B cell (primary cell): ENCODE measurements at regions of chr16 and their contacts with region 1.

Region 1: DNA sequence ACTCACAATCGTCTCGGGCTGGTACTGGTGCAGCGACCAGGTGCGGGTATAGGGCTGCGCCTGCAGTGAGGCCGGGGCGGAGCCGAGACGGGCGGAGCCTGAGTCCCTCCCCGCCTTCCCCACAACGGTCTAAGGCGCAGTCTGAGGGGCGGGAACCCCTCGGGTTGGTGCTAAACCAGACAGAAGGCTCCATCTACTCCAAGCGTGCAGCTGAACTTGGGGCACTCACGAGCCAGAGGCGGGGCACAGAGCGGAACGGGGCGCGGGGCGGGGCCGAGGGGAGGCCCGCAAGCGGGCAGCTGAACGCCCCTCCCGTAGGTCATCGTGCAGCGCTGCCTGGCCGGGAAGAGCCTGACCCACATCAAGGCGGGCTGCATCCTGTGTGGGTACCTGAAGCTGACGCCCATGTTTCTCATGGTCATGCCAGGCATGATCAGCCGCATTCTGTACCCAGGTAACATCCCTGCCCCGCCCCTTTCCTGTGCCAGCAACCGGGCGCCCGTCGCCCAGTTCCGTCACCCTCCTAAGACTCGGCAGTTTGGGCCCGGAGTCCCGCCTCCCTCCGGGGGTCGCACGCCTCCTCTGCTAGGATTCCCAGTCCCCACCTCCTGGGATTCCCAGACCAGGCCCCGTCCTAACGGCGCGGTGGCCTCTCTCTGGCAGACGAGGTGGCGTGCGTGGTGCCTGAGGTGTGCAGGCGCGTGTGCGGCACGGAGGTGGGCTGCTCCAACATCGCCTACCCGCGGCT is 5.0 kb downstream of the SLC5A2 start:
- DNase-seq: peak; percentile 76
- ATAC-seq: peak; percentile 92
- H3K4me3 ChIP-seq: peak overlapping the region; percentile 12 to 72 (median 56)
- H3K4me3 Mint-ChIP-seq: peak overlapping the region; percentile 96
- H3K27ac ChIP-seq: no peak overlapping the region
- H3K27ac Mint-ChIP-seq: peak overlapping the region; percentile 79
- H3K4me1 ChIP-seq: peaks cover 10 to 16% of the 10 kb centered on the region in 2 donors
- H3K4me1 Mint-ChIP-seq: peaks cover 12% of the 10 kb centered on the region
- H3K27me3 ChIP-seq: peaks cover 0 to 12% (median 4%) of the 10 kb centered on the region in 4 experiments
- H3K27me3 Mint-ChIP-seq: peaks cover 4% of the 10 kb centered on the region
- CTCF ChIP-seq: no peak

Region 2: DNA sequence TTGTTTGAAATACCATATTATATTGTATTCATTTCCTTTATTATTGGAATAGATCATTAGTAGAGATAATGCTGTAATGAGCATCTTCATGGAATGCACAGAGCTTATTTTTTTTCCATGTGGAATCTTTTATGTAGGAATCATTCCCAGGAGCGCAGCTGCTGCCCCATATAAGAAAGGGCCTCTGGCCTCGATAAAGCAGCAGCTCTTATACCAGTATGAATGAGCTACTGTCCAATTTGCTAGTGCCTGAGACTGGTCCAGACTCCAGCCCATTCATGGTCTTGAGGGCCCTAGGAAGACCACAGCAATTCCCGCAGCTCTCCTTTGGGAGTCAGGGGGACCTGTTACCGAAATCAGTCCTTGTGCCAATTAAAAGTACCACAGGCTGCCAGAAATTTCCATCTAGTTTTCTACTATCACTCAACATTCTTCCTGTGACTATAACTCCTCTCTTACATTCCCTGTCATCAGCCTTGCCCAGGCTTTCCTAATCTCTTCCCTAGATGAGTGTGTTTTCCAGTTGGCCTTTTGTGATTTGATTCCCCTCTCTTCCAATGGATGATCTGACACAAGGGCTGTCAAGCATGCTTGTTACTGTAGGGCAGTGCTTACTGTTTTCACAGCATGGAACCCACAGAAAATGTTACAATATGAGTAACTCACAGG is 47.2 kb before region 1 on chr16:
- CTCF ChIA-PET with region 1: no interaction called
- POLR2A ChIA-PET with region 1: no interaction called
- intact Hi-C with region 1: no loop called
- DNase-seq: no peak
- ATAC-seq: no peak
- H3K4me3 ChIP-seq: no peak overlapping the region
- H3K4me3 Mint-ChIP-seq: no peak overlapping the region
- H3K27ac ChIP-seq: no peak overlapping the region
- H3K27ac Mint-ChIP-seq: no peak overlapping the region
- H3K4me1 ChIP-seq: peaks cover 11 to 12% of the 10 kb centered on the region in 2 donors
- H3K4me1 Mint-ChIP-seq: peaks cover 19% of the 10 kb centered on the region
- H3K27me3 ChIP-seq: peaks cover 0 to 6% (median 2%) of the 10 kb centered on the region in 4 experiments
- H3K27me3 Mint-ChIP-seq: peaks cover 3% of the 10 kb centered on the region
- CTCF ChIP-seq: no peak

Region 3: DNA sequence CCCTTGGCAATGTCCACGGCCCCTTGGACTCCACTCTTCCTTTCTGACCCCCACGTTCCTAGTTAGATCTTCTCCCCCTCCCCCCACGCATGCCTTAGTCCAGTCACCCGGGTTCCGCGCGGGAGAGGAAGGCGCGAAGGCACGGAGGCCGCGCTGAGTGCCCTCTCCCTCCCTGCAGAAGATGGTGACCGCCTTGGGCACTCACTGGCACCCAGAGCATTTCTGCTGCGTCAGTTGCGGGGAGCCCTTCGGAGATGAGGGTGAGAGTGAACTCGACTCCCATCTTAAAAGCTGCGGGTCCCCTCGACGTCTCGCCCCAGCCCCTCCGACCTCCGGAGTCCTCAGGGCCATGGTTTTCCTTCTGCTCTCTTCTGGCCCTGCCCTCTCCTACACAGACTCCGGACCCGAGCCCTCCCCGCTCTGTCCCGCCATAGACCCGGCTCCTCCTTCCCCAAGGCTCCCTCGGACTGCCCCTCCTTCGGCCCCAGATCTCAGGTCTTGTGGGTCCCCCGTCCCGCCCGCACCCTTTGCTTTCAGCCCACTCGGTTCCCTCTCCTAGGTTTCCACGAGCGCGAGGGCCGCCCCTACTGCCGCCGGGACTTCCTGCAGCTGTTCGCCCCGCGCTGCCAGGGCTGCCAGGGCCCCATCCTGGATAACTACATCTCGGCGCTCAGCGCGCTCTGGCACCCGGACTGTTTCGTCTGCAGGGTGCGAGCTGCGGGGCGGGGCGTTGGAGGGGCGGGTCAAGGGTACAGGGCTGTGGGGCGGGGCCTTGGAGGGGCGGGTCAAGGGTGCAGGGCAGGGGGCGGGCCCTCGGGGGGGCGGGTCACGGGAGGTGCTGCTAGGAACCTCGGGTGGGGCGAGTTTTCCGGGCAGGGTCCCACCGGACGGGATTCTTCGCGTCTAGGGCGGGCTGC is 11.3 kb before region 1 on chr16:
- CTCF ChIA-PET with region 1: interaction called, 6 read pairs
- POLR2A ChIA-PET with region 1: interaction called, 6 read pairs
- intact Hi-C with region 1: loop called (anchors 1 kb)
- DNase-seq: peak; percentile 81
- ATAC-seq: peak; percentile 91
- H3K4me3 ChIP-seq: peak overlapping the region in 4 of 5 experiments; percentile 57 to 65 (median 62)
- H3K4me3 Mint-ChIP-seq: peak overlapping the region; percentile 90
- H3K27ac ChIP-seq: no peak overlapping the region
- H3K27ac Mint-ChIP-seq: peak overlapping the region; percentile 83
- H3K4me1 ChIP-seq: peaks cover 19 to 28% of the 10 kb centered on the region in 2 donors
- H3K4me1 Mint-ChIP-seq: peaks cover 33% of the 10 kb centered on the region
- H3K27me3 ChIP-seq: peaks cover 0 to 21% (median 8%) of the 10 kb centered on the region in 4 experiments
- H3K27me3 Mint-ChIP-seq: peaks cover 8% of the 10 kb centered on the region
- CTCF ChIP-seq: no peak